Posterior vena cava (tissue), 2 donors: ENCODE measurements at regions of chr7 and their contacts with region 1.

Region 1: DNA sequence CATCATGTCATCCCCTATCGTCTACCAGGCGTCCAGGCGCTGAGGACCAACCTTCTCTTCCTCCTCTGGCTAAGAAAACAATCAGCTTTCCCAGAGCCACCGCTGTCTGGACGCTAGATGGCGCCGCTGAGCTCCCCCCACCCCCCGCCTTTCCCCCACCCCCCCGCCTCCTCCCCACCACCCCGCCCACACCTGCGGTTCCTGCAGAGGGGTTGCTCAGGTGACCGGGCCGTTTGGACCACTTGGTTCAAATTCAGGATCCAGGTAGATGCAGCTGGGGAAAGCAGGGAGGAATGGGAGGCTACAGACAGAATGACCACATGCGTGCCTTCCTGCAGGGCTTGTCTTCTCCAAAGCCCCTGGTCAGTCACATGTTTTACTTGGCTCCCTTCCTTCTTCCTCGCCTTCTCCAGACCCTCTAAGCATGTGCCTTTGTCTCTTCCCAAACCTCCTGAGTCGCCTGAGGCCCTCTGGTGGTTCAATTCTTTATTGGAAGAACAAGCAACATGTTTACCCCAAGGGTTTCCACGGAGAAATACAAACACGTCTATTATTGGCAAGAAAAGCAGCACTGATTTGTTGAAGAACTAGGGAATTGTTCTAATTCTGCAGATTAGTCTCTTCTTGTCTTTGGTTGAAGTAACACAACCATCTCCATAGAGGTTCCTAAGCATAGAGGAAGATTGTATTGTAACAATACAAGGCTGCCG is 24.7 kb downstream of the AOC1 start:
- DNase-seq: no peak

Region 2: GRCh38 chr7:148994601-148995000 is 1882.4 kb before region 1 on chr7:
- intact Hi-C with region 1: loop called in 1 of 2 experiments (anchors 5 kb)
- DNase-seq: peak; percentile 37

Region 3: DNA sequence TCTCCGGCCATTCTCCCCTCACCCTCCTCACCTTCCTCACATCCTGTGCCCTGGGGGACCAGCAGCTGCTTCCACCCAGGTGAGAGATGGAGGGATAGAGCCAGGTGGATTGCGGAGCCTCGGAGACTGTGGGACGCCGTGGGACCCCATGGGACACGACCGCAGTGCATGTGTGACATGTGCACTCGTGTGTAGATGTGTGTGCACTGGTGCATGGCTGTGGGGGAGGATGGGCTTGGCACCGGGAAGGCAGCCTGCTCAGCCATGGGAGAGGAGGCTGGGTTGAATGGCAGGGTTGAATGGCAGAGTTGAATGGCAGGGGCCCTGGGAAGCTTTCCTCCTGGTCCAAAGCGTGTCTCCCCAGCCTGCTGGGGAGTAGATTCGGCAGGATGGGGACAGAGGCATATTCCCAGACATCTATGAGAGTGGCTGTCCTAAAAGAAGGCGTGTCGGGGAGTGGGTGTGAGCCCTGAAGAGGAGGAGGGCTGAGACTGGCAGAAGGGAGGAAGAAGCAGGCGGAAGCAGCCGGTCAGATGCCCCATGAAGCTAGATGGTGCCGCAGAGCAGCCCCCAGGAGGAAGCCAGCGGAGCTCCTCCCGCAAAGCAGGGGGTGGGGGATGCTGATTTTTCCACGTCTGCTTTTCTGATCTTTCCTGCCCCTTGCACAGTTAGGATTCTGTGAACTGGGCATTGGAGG is 425.7 kb before region 1 on chr7:
- intact Hi-C with region 1: no loop called
- DNase-seq: peak; percentile 90

Region 4: DNA sequence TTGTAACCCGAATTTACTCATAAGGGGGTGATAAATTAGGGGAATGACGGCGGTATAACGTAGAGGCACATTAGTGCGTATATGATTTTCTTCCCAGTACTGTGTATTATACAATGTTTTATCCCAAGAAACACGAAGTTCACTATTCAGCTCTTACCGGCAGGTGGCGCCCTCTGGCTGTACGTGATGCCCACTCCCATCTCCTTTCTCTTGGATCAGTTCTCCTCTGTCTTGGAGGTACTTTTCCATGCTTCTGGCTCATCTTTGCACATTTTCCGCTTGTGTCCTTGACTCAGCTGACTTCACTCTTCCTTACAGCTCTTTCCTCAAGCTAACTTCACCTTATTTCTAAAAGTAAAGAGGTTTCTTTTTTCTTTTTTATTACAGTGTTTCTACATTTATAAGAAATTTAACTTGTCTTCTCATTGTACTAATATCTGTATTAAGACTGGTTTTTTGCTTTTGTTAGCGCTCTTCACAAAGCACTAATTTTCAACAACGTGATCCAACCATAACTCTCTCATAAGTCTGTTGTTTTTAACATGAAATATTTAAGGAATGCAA is 98.2 kb before region 1 on chr7:
- intact Hi-C with region 1: loop called in 1 of 2 experiments (anchors 10 kb)
- DNase-seq: peak; percentile 94

Region 5: DNA sequence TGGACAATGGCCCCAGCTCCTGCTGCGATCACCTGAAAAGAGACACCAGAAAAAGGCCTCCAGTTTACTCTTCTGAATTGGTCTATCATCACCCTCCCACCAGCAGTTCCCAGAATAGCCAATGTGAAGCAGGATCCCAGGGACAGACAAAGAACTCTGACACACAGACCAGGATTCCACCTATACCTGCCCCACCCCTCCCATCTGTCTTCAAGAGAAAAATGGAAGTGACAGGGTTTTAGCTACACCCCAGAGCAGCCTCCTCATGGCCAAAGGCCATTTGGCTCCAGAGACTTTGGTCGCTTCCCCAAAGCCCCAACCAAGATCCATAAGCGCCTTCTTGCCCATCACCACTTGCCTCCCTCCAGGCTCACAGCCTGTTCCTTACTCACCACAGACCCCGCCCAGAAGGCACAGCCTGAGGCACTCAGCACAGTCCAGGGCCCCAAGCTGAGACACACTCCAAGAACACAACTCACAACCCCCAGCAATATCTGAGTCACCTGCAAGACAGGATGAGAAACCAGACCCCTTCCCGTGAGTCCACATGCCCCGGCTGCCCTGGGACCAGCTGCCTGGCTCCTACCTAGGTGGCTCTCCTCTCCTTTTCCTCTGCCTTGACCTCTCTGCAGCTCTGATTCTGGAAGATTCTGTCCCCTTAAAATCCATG is 83.3 kb before region 1 on chr7:
- intact Hi-C with region 1: no loop called
- DNase-seq: no peak

Region 6: GRCh38 chr7:151123822-151124464 is 247.0 kb after region 1 on chr7:
- intact Hi-C with region 1: no loop called
- DNase-seq: peak; percentile 94

Region 7: DNA sequence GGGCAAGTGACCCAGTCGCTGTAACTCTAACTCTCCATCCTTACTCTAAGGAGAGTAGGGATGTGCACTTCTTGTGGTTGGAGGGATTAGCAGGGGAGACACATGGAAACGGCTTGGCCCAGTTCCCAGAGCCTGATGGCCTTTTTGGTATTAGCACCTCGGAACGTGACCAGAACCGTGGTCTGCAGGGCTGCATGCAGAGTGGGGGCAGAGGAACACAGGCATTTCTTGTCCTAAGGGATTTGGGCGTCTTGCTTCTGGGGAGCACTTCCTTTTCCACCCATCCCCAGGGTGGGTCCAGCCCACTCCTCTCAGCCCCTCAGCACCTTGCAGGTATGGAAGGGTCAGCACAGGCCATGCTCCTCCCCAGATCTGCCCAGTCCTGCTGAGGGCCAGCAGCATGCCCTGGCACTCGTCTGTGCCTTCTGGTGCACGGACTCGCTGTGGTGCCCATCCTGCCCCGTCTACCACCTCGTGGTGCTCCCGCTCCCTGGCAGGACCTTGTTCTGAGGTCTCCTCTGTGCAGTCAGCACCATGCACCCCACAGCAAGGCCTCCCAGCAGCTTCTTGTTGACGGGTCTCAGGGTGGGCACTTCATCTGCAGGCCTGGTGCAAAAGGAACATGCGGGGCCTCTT is 1992.2 kb after region 1 on chr7:
- intact Hi-C with region 1: no loop called
- DNase-seq: no peak